AG04449 (cell line): ENCODE measurements at regions of chr10 and their contacts with region 1.

Region 1: GRCh38 chr10:29585488-29585980 is 49.2 kb downstream of the SVIL start:
- DNase-seq: no peak
- H3K4me3 ChIP-seq: no peak overlapping the region
- CTCF ChIP-seq: no peak

Region 2: DNA sequence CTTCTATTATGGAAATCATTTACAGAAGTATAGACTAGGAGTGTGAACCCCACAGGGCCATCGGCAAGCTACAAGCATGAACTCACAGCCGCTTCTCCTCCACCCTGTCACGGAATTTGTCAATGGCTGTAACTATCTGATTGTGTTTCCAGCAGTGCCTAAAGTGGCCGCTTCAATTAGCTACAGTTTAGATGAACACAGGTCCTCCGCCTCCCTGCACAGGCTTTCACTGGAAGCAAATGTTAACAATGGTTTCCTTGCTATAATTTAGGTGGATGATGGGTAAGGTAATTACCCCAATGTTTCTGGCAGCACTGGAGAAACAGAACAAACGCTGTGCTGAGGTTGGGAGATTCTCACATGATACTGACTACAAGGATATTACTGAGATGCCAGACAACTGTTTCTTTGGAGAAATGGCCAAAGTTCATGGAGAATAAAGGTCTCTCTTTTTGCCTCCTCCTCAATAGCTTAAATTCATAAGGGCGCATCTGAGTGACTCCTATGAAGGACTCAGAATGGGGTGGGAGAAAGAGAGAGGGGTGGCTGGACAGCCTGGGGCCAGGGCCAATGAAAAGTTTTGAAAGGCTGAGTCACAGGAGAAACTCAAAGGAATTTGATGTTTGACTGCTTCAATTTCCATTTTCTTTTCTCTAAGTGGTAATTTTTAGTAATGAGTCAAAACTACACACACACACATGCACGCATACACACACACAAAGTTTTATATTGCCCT is 29.6 kb before region 1 on chr10:
- CTCF ChIA-PET with region 1: interaction called, 15 read pairs
- POLR2A ChIA-PET with region 1: no interaction called
- DNase-seq: peak; percentile 51
- H3K4me3 ChIP-seq: no peak overlapping the region
- CTCF ChIP-seq: no peak

Region 3: GRCh38 chr10:29598851-29599311 is 13.3 kb after region 1 on chr10:
- CTCF ChIA-PET with region 1: interaction called, 28 read pairs
- POLR2A ChIA-PET with region 1: no interaction called
- DNase-seq: no peak
- H3K4me3 ChIP-seq: no peak overlapping the region
- CTCF ChIP-seq: no peak

Region 4: DNA sequence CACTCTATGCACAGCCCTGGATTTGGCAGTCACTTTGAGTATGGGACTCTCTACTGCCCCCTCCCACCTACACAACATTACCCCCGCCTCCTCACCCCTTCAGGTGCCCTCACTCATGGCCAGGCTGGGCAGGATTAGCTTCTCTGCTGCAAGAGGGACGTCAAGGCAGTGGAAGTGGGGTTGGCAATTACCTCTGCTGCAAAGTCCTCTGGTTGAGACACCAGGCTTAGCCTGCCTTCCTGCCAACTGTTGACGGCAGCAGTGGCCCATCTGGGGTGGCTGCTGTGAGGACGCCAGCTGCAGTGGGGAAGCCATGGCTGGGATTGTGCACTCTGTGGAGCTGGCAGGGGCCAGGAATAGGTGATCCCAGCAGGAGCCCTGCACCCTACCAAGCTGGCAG is 22.5 kb after region 1 on chr10:
- CTCF ChIA-PET with region 1: interaction called, 37 read pairs
- POLR2A ChIA-PET with region 1: no interaction called
- DNase-seq: no peak
- H3K4me3 ChIP-seq: no peak overlapping the region
- CTCF ChIP-seq: no peak

Region 5: DNA sequence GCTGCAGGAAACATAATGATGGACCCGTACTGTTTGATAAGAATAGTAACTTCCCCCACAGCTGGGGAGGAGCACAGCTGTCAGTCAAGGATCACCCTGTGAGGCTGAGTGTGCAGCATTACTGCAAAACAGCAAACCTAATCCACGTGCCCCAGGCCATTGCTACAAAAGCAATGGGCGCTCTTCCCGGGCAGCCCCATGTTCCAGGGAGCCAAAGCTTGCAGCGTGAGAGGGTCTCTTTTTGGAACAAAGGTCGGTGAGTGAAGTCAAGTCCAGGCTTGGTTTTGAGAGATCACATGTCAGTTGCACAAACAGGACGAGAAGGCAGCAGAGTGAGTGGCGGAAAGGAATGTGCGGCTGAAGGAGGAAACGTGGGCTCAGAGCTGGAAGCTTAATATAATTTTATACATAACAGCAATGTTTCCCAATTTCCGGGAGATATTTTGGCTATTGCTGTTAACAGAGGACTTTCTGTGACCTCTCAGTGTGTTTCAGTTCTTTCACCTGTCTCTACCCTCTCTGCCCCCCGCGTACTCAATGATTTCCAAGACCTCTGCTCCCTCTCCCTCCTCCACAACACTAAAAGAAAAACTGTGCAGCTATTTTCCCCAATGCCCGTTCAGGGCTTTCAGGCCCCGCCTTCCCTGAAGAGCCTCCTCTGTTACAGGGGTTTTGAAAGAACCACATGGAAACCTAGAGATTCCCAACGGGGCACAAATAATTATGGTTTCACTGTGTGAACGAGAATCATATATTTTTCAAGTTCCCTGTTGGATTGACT is 634.6 kb after region 1 on chr10:
- CTCF ChIA-PET with region 1: no interaction called
- POLR2A ChIA-PET with region 1: no interaction called
- DNase-seq: no peak
- H3K4me3 ChIP-seq: no peak overlapping the region
- CTCF ChIP-seq: no peak